ENCODE measurements at regions of chr7 and their contacts with region 1.

Region 1: DNA sequence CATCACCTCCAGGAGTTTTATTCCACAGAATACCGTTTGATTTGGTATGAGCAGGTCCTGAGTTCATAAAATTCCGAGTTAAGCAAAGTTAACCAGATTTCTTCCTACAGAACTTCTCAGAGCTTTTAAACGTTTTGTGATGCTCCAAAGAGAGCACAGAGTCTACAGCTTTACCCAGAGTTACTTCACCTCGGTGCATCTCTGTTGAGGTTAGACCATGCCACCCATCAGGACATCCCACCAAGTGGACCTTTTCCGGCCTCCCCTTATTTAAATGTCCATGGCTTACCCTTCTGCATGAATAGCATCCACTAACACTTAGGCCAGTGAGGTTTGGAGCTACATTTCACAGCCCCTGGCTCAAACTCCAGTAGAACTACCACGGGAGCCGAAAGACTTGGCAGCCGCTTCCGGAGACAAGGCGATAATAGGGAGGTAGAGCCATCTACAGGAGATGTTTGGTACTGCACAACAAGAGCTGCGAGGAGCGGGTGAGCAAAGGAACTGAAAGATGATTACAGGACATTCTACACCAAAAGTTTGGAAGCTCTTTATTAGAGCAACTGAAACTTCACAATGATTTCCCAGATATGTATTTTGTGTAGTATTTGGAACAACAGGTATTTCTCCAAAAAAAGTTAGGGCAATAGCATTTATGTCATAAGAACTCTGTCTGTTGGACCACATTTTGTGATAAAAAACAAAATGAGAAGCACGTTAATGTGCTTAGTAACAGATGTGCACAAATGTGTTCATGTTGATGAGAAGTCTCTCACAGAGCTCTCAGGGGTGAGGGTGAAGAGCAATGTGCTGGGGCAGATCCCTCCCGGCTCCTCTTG is 174.7 kb downstream of the HERPUD2 start:
- DNase-seq: peak in 1 of 2 donors; percentile 69
- ATAC-seq: peak; percentile 89
- H3K4me3 ChIP-seq: no peak overlapping the region
- H3K27ac ChIP-seq: no peak overlapping the region
- H3K4me1 ChIP-seq: no peaks in the 10 kb centered on the region
- H3K27me3 ChIP-seq: peaks cover 0 to under 1% of the 10 kb centered on the region in 2 donors

Region 2: GRCh38 chr7:34823640-34824258 is 696.4 kb before region 1 on chr7:
- intact Hi-C with region 1: loop called in 1 of 2 experiments (anchors 10 kb)
- DNase-seq: peak in 1 of 2 donors; percentile 47
- ATAC-seq: no peak
- H3K4me3 ChIP-seq: no peak overlapping the region
- H3K27ac ChIP-seq: no peak overlapping the region
- H3K4me1 ChIP-seq: no peaks in the 10 kb centered on the region
- H3K27me3 ChIP-seq: no peaks in the 10 kb centered on the region